ENCODE measurements at regions of chr11 and their contacts with region 1.

Region 1: GRCh38 chr11:58524232-58525036 is 16.5 kb upstream of the OR5B21 start:
- DNase-seq: peak; percentile 84
- H3K4me3 Mint-ChIP-seq: peak overlapping the region; percentile 79
- H3K27ac Mint-ChIP-seq: peak overlapping the region; percentile 91
- H3K4me1 Mint-ChIP-seq: peaks cover 22% of the 10 kb centered on the region
- H3K27me3 Mint-ChIP-seq: no peaks in the 10 kb centered on the region

Region 2: GRCh38 chr11:57667736-57668435 is 856.5 kb before region 1 on chr11 and contains the start of gene ZDHHC5:
- intact Hi-C with region 1: loop called (anchors 10 kb)
- DNase-seq: peak; percentile 100
- H3K4me3 Mint-ChIP-seq: peak within 1 kb of the TSS; percentile 86
- H3K27ac Mint-ChIP-seq: peak within 1 kb of the TSS; percentile 97
- H3K4me1 Mint-ChIP-seq: peaks cover 35% of the 10 kb centered on the region
- H3K27me3 Mint-ChIP-seq: no peaks in the 10 kb centered on the region
- total RNA-seq, gene ZDHHC5: 78.4 and 80.9 TPM in 2 replicates

Region 3: GRCh38 chr11:57792060-57792541 is 732.3 kb before region 1 on chr11:
- intact Hi-C with region 1: loop called (anchors 2 kb)
- DNase-seq: peak; percentile 95
- H3K4me3 Mint-ChIP-seq: peak overlapping the region; percentile 79
- H3K27ac Mint-ChIP-seq: peak overlapping the region; percentile 93
- H3K4me1 Mint-ChIP-seq: peaks cover 41% of the 10 kb centered on the region
- H3K27me3 Mint-ChIP-seq: no peaks in the 10 kb centered on the region

Region 4: GRCh38 chr11:58391879-58392278 is 132.6 kb before region 1 on chr11:
- intact Hi-C with region 1: loop called (anchors 1 kb)
- DNase-seq: no peak
- H3K4me3 Mint-ChIP-seq: no peak overlapping the region
- H3K27ac Mint-ChIP-seq: no peak overlapping the region
- H3K4me1 Mint-ChIP-seq: no peaks in the 10 kb centered on the region
- H3K27me3 Mint-ChIP-seq: no peaks in the 10 kb centered on the region